ENCODE measurements at regions of chr1 and their contacts with region 1.

Region 1: GRCh38 chr1:151281969-151282882 is at the start of gene ZNF687:
- DNase-seq: peak; percentile 98
- H3K4me3 Mint-ChIP-seq: peak within 1 kb of the TSS; percentile 94
- H3K27ac Mint-ChIP-seq: peak within 1 kb of the TSS; percentile 100
- H3K4me1 Mint-ChIP-seq: peaks cover 36% of the 10 kb centered on the region
- H3K27me3 Mint-ChIP-seq: no peaks in the 10 kb centered on the region
- total RNA-seq, gene ZNF687: 26.9 and 27.3 TPM in 2 replicates

Region 2: DNA sequence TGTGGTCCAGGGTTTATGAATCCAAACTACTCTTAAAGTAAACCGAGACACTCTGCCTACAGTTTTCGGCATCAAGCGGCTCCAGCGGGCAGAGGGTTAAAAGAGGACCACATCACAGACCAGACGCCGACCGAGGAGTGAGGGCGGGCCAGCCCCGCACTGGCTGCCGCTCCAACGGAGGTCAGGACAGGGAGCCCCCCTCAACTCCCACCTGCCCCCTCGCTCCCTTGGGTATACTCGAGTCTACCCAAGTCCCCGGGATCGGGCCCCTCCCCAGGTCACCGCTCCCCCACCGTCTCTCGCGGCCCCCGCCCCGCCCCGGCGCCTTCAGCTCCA is 406.1 kb before region 1 on chr1:
- intact Hi-C with region 1: loop called (anchors 5 kb)
- DNase-seq: no peak
- H3K4me3 Mint-ChIP-seq: peak overlapping the region; percentile 86
- H3K27ac Mint-ChIP-seq: peak overlapping the region; percentile 88
- H3K4me1 Mint-ChIP-seq: peaks cover 34% of the 10 kb centered on the region
- H3K27me3 Mint-ChIP-seq: no peaks in the 10 kb centered on the region

Region 3: DNA sequence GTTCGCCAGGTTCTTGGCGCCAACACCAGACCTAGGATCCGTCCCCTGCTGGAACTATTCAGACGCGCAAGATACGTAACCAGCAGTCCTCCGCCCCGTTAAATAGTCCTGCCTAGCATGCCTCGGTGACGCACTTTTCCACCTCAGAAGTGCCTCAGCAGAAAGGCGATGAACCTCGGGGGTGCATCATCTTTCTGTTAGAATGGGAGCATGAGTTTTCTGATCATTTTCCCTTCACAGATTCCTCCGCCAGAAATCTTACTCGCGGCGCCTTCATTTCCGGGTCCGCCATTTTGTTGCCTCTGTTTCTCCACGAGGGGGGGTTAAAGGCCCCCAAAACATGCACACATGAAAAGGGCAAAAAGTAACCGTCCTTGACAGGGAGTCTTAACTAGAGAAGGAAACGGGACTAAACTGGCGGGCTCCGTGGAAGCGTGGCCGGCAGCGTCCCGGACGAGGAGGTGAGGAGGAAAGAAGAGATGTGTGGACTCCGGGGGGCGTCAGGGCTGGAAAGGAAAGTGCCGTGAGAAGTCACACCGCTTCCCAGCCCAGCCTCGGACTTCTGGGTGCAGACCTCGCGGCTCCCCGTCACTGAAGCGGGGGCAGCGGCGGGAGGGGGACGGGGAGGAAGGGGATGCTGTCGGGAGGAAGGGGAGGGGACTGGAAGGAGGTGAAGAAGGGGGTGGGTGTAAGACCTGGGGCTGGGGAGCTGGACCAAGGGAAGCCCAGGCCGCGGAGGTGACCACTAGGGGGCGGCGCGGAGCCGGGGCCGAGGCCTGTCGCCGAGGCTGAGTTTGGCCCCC is 211.6 kb before region 1 on chr1 and contains the start of gene GABPB2:
- intact Hi-C with region 1: loop called (anchors 1 kb)
- DNase-seq: peak; percentile 81
- H3K4me3 Mint-ChIP-seq: peak within 1 kb of the TSS; percentile 98
- H3K27ac Mint-ChIP-seq: peak within 1 kb of the TSS; percentile 100
- H3K4me1 Mint-ChIP-seq: peaks cover 17% of the 10 kb centered on the region
- H3K27me3 Mint-ChIP-seq: no peaks in the 10 kb centered on the region
- total RNA-seq, gene GABPB2: 19.4 and 21.5 TPM in 2 replicates

Region 4: DNA sequence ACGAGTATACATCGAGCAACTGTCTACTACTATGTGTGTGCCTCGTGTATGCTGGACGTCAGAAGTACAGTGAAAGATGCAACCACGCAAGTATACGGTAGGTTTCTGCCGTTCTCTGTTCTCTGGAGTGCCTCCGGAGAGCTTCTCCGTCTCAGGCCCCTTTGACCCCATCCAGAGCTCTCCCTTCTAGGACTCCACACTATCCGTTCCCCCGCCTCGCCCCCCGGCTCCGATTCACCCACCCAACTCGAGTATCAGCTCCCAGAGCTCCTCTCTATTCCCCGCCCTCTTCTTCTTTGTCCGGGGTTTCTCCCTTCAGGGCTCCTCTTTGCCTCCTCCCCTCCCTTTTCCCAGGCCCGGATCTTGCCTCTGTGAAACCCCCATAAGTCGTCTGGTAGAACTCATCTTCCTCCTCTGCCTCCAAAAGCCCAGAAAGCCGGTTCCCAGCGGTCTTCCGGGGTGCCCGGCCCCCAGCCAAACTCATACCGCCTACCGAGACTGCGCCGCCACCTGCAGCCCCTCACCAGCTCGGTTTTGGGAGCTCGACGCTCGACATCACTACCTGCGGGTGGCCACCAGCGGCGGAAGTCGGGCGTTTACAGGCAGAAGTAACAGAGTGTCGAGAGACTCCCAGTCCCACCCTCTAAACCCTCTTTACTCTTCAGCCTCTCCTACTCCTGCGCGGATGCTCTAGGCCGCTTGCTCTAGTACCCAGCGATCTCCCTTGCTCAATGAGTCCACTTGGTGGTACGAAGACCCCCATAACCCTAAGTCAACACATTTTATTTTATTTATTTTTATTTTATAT is 92.4 kb before region 1 on chr1 and contains the start of gene VPS72:
- intact Hi-C with region 1: loop called (anchors 2 kb)
- DNase-seq: peak; percentile 83
- H3K4me3 Mint-ChIP-seq: peak within 1 kb of the TSS; percentile 99
- H3K27ac Mint-ChIP-seq: peak within 1 kb of the TSS; percentile 97
- H3K4me1 Mint-ChIP-seq: peaks cover 36% of the 10 kb centered on the region
- H3K27me3 Mint-ChIP-seq: peaks cover 7% of the 10 kb centered on the region
- total RNA-seq, gene VPS72: 90.0 and 96.4 TPM in 2 replicates

Region 5: GRCh38 chr1:151311589-151312331 is 29.5 kb after region 1 on chr1:
- intact Hi-C with region 1: loop called (anchors 1 kb)
- DNase-seq: peak; percentile 60
- H3K4me3 Mint-ChIP-seq: no peak overlapping the region
- H3K27ac Mint-ChIP-seq: peak overlapping the region; percentile 93
- H3K4me1 Mint-ChIP-seq: peaks cover 37% of the 10 kb centered on the region
- H3K27me3 Mint-ChIP-seq: no peaks in the 10 kb centered on the region

Region 6: DNA sequence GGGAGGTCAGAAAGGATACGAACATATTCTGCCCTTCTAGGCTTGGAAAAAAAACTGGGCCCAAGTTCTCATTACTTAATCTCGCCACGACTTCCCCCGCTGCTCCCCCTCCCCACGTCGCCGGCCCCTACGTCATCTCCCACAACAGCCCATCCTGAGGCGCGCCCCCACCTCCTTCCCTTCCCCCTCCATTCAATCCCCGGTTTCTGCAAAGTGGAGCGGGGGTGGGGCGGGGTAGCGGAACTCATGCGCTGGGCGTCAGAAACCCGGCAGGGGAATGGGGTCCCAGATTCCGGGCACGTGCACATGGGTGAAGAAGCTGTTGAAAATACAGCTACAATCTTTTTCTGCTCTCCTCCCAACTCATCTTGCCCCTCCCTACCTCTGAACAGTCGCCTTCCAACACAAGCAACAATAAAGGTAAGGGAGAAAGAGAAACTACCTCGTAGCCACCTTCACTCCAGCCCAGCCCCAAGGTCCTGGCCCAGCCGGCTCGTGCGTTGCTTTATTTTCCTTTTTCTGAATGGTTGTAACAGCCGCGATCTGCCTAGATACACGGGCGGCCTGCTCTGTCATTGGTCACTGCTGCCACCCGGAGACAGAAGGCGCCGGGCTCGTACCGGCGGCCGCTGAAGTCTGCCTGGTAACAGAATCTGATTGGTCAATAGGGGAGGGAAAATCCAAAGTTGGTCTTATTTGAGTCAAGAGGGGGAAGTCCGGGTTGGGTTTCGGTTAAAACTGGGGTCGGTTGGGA is 64.7 kb after region 1 on chr1 and contains the start of gene RFX5:
- intact Hi-C with region 1: loop called (anchors 1 kb)
- DNase-seq: peak; percentile 95
- H3K4me3 Mint-ChIP-seq: peak within 1 kb of the TSS; percentile 95
- H3K27ac Mint-ChIP-seq: peak within 1 kb of the TSS; percentile 99
- H3K4me1 Mint-ChIP-seq: peaks cover 45% of the 10 kb centered on the region
- H3K27me3 Mint-ChIP-seq: no peaks in the 10 kb centered on the region
- total RNA-seq, gene RFX5: 78.1 and 83.4 TPM in 2 replicates

Region 7: DNA sequence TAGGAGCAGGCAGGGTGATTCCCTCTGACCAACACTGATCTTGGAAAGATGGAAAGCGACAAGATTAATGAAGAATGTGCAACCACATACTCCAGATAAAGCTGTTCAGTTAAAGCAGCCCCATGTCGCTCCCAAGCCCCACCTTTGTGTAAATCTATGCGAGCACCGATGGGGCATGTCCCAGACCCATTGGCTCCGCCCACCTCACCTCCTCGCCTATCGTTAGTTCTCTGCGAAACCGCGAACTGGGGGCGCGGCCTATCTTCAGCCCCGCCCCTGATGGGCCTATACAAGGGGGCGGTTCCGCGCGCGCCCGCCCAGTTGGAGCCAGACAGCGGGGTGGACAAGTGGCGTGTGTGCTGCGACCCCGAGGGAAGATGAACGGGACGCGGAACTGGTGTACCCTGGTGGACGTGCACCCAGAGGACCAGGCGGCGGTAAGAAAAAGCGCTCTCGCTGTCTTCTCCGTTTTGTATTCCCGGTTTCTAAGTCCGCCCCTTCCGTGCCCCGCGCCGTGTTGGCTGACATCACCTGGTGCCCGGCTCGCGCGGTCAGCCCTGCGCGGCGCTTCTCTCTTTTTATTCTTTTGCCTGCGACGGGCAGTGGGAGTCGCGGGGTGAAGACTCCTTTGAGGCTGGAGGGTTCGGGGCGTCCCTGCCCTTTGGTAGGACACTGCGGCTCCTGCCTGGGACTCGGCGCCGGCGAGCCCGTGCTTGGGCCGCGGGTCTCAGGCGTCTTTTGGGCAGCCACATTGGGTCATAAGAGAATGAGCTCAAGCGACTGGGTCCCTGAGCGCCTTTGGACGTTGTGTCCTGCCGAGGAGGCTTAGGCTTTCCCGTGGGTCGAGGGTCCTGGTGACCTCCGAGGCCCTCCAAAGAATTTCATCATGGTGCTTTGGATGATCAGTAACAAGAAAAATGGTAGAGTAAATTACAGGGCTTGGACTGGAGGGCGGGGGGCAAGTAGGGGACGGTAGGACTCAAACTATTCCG is 258.1 kb after region 1 on chr1 and contains the start of gene TUFT1:
- intact Hi-C with region 1: loop called (anchors 1 kb)
- DNase-seq: peak; percentile 91
- H3K4me3 Mint-ChIP-seq: peak within 1 kb of the TSS; percentile 91
- H3K27ac Mint-ChIP-seq: peak within 1 kb of the TSS; percentile 62
- H3K4me1 Mint-ChIP-seq: peaks cover 16% of the 10 kb centered on the region
- H3K27me3 Mint-ChIP-seq: peaks cover 10% of the 10 kb centered on the region
- total RNA-seq, gene TUFT1: 1.9 and 2.3 TPM in 2 replicates

Measured in activated T-helper 1 cell treated with anti-CD3 and anti-CD28 coated beads, Interleukin-12 subunit alpha, Interleukin-12 subunit beta, Interleukin-2, Interleukin-4 antibody, amounts not matched to agents 30 ng/mL and 10 ng/mL and 1 ng/mL, durations not matched to agents 14 hours and 24 hours and 36 hours (primary cell).